Right cardiac atrium (tissue), 5 donors: ENCODE measurements at regions of chr7 and their contacts with region 1.

Region 1: GRCh38 chr7:111752022-111752582 is 189.8 kb upstream of the IMMP2L start:
- DNase-seq: peak; percentile 52 to 72 (median 64)
- ATAC-seq: peak in 1 of 2 donors; percentile 57
- H3K4me3 ChIP-seq: no peak overlapping the region
- H3K27ac ChIP-seq: no peak overlapping the region
- H3K4me1 ChIP-seq: no peaks in the 10 kb centered on the region
- H3K27me3 ChIP-seq: no peaks in the 10 kb centered on the region

Region 2: DNA sequence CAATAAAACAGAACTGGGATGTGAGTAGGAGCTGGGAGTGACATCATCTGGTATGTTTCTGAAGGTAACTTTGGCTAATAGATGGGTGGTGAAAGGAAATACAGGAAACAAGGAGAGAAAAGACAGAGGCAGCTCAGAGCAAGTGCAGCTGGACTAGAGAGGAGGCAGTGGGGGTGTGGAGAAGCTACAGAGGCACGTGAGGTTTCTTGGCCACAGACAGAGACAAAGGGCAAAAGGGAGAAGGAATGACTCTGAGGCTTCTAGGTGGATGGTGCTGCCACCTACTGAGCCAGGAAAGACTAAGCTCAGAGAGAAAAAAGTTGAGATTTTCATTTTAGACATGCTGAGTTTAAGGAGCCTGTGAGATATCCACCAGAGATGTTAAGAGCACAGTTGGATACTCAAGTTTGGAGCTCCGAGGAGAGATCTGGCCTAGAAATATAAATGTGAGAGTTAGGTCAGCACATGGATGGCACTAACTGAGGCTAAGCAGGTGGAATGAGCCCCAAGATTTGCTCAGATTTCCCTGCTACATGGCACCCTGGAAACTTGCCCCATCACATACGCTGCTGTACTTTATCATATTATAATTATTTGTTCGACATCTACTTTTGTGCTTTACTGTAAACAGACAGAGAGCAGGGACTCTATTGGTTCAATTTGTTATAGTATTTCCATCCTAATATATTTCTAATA is 103.2 kb after region 1 on chr7:
- intact Hi-C with region 1: loop called in 1 of 4 experiments (anchors 10 kb)
- DNase-seq: no peak
- ATAC-seq: peak; percentile 65 to 80
- H3K4me3 ChIP-seq: no peak overlapping the region
- H3K27ac ChIP-seq: no peak overlapping the region
- H3K4me1 ChIP-seq: no peaks in the 10 kb centered on the region
- H3K27me3 ChIP-seq: no peaks in the 10 kb centered on the region

Region 3: GRCh38 chr7:112052993-112053736 is 301.1 kb after region 1 on chr7:
- intact Hi-C with region 1: no loop called
- DNase-seq: no peak
- ATAC-seq: no peak
- H3K4me3 ChIP-seq: no peak overlapping the region
- H3K27ac ChIP-seq: no peak overlapping the region
- H3K4me1 ChIP-seq: peaks cover 5% of the 10 kb centered on the region
- H3K27me3 ChIP-seq: no peaks in the 10 kb centered on the region

Region 4: DNA sequence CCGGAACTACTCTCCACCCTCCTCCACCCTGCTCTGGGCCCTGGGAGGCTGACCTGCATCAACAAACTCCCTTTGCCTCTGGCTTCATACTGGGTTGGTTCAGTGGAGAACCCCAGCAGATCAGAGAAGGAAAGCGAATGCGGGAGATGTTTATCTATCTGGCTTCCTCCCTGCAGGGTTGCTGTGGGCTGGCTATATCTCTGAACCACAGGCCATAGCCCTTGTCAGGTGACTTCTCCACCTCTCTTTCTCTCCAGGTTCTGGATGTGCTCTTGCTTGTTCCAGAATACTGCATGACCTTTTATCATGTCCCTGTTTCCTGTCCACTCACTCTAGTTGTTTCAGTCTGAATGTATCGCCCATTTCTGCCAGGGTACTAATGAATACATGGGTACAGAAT is 646.4 kb after region 1 on chr7:
- intact Hi-C with region 1: loop called in 2 of 4 experiments (anchors 10 kb)
- DNase-seq: no peak
- ATAC-seq: no peak
- H3K4me3 ChIP-seq: no peak overlapping the region
- H3K27ac ChIP-seq: no peak overlapping the region
- H3K4me1 ChIP-seq: no peaks in the 10 kb centered on the region
- H3K27me3 ChIP-seq: no peaks in the 10 kb centered on the region

Region 5: GRCh38 chr7:112414855-112415490 is 662.9 kb after region 1 on chr7:
- intact Hi-C with region 1: loop called in 1 of 4 experiments (anchors 5 kb)
- DNase-seq: no peak
- ATAC-seq: peak in 1 of 2 donors; percentile 43
- H3K4me3 ChIP-seq: no peak overlapping the region
- H3K27ac ChIP-seq: no peak overlapping the region
- H3K4me1 ChIP-seq: no peaks in the 10 kb centered on the region
- H3K27me3 ChIP-seq: no peaks in the 10 kb centered on the region